Dorsolateral prefrontal cortex (tissue), 120 donors: ENCODE measurements at regions of chr21 and their contacts with region 1.

Region 1: GRCh38 chr21:39114871-39115575 is 68.2 kb downstream of the PSMG1 start:
- DNase-seq: no peak
- H3K4me3 ChIP-seq: no peak overlapping the region
- H3K27ac ChIP-seq: no peak overlapping the region
- H3K27me3 ChIP-seq: no peaks in the 10 kb centered on the region
- CTCF ChIP-seq: no peak

Region 2: DNA sequence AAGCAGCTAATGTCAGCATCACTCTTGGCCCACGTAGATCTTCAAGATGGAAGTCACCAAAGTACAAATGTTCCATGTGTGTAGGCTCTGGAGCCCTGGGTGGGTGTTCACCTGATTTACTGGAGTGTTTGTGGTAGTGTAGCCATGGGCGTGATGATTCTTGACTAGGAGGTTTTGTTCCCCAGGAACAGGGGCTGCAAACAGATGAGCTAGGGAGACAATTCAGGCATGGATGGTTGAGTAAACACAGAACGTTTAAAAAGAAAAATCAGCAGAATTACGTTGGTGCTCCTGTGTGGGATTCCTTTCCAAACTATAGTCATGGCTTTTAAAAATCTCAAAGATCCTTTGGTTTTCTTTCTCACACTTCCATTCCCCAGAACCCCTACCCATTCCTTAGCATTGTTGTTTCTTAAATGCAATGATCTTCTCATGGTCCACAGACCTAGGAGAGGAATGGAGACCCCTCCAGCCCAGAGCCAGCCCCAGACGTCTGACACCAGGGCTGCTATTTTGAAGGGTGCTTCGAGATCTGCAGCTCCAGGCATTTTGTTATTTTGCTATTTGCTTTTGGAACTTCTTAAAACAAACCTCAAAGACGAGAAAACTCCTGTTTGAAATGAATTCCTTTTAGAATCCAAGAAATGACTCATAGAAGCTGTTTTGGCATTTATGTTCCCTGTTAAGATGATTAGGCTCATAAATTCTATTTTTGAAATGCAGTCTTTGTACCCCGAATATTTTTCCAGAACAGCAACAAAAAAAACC is 194.2 kb before region 1 on chr21:
- intact Hi-C with region 1: loop called in 1 of 2 experiments (anchors 5 kb)
- DNase-seq: no peak
- H3K4me3 ChIP-seq: no peak overlapping the region
- H3K27ac ChIP-seq: peak overlapping the region in 55 of 59 donors; percentile 11 to 88 (median 72)
- H3K27me3 ChIP-seq: no peaks in the 10 kb centered on the region
- CTCF ChIP-seq: no peak

Region 3: GRCh38 chr21:38958940-38959691 is 155.9 kb before region 1 on chr21:
- intact Hi-C with region 1: loop called in 1 of 2 experiments (anchors 5 kb)
- DNase-seq: no peak
- H3K4me3 ChIP-seq: no peak overlapping the region
- H3K27ac ChIP-seq: peak overlapping the region in 51 of 59 donors; percentile 12 to 89 (median 68)
- H3K27me3 ChIP-seq: no peaks in the 10 kb centered on the region
- CTCF ChIP-seq: no peak